Naive thymus-derived CD4-positive, alpha-beta T cell (primary cell): ENCODE measurements at regions of chr19 and their contacts with region 1.

Region 1: GRCh38 chr19:49331616-49332055 is 3.6 kb upstream of the CD37 start:
- DNase-seq: peak in 8 of 9 donors; percentile 48 to 76 (median 65)
- ATAC-seq: peak; percentile 83
- H3K4me3 ChIP-seq: no peak overlapping the region
- H3K4me3 Mint-ChIP-seq: peak overlapping the region in 9 of 10 donors; percentile 14 to 99 (median 49)
- H3K27ac ChIP-seq: peak overlapping the region; percentile 4
- H3K27ac Mint-ChIP-seq: peak overlapping the region; percentile 54 to 99 (median 87)
- H3K4me1 ChIP-seq: peaks cover 37 to 44% of the 10 kb centered on the region in 2 donors
- H3K4me1 Mint-ChIP-seq: peaks cover 54 to 80% (median 70%) of the 10 kb centered on the region in 7 donors
- H3K27me3 ChIP-seq: no peaks in the 10 kb centered on the region
- H3K27me3 Mint-ChIP-seq: no peaks in the 10 kb centered on the region

Region 2: DNA sequence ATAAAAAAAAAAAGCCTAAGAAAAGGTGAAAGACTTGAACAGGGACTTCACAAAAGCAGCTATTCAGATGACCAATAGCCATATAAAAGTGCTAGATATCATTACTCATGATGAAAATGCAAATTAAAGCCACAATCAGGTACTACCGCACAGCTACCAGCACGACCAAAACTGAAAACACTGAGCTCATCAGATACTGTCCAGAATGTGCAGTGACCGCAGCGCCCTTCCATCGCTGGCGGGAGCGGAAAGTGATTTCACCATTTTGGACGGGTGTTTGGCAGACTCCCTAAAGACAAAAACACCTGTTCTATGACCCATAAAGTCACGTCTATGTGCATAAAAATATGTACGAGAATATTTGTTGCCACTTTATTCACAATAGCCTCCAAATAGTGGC is 67.4 kb before region 1 on chr19:
- CTCF ChIA-PET with region 1: interaction called, 4 read pairs
- POLR2A ChIA-PET with region 1: no interaction called
- intact Hi-C with region 1: loop called (anchors 2 to 10 kb)
- DNase-seq: no peak
- ATAC-seq: no peak
- H3K4me3 ChIP-seq: no peak overlapping the region
- H3K4me3 Mint-ChIP-seq: no peak overlapping the region
- H3K27ac ChIP-seq: no peak overlapping the region
- H3K27ac Mint-ChIP-seq: no peak overlapping the region
- H3K4me1 ChIP-seq: no peaks in the 10 kb centered on the region
- H3K4me1 Mint-ChIP-seq: peaks cover 0 to 8% (median 0%) of the 10 kb centered on the region in 7 donors
- H3K27me3 ChIP-seq: no peaks in the 10 kb centered on the region
- H3K27me3 Mint-ChIP-seq: peaks cover 13 to 30% (median 24%) of the 10 kb centered on the region in 5 donors

Region 3: DNA sequence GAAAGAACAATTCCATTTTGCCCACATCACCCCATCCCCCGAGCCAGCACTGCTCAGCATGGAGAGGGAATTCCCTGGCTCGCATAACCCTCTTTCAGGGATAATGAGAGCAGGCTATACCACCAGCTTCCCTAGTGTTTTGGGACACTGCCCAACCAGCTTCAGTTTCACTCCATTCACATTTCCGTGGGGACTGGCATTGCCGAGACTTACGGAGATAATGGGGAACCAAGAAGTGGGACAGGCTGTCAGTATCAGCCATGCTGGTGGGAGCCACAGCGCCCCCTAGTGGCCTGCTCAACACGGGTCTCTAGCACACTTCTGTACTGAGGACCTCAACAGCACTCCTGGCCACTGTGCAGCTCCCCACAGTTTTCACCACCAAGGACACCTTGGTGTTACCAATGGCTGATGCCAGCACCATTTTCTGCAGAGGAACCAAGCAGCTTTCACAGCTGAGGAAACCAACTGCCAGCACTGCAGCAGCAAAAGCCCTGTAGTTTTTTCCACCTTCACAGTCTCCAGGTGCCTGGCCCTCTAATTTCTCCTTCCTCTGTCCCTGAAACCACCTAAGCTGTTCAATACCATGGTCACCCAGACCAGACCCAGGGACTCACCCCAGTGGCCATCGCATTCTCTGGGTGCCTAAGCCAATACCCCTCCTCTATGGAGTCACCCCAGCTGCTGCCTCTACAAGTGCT is 30.3 kb before region 1 on chr19:
- CTCF ChIA-PET with region 1: interaction called, 3 read pairs
- POLR2A ChIA-PET with region 1: interaction called, 6 read pairs
- intact Hi-C with region 1: loop called in 1 of 2 experiments (anchors 1 kb)
- DNase-seq: peak; percentile 45 to 82 (median 66)
- ATAC-seq: peak; percentile 99
- H3K4me3 ChIP-seq: no peak overlapping the region
- H3K4me3 Mint-ChIP-seq: peak overlapping the region in 2 of 10 donors; percentile 15 to 25
- H3K27ac ChIP-seq: no peak overlapping the region
- H3K27ac Mint-ChIP-seq: peak overlapping the region in 1 of 9 donors; percentile 36
- H3K4me1 ChIP-seq: no peaks in the 10 kb centered on the region
- H3K4me1 Mint-ChIP-seq: peaks cover 0 to 8% (median 4%) of the 10 kb centered on the region in 7 donors
- H3K27me3 ChIP-seq: no peaks in the 10 kb centered on the region
- H3K27me3 Mint-ChIP-seq: peaks cover 0 to 17% (median 0%) of the 10 kb centered on the region in 5 donors

Region 4: DNA sequence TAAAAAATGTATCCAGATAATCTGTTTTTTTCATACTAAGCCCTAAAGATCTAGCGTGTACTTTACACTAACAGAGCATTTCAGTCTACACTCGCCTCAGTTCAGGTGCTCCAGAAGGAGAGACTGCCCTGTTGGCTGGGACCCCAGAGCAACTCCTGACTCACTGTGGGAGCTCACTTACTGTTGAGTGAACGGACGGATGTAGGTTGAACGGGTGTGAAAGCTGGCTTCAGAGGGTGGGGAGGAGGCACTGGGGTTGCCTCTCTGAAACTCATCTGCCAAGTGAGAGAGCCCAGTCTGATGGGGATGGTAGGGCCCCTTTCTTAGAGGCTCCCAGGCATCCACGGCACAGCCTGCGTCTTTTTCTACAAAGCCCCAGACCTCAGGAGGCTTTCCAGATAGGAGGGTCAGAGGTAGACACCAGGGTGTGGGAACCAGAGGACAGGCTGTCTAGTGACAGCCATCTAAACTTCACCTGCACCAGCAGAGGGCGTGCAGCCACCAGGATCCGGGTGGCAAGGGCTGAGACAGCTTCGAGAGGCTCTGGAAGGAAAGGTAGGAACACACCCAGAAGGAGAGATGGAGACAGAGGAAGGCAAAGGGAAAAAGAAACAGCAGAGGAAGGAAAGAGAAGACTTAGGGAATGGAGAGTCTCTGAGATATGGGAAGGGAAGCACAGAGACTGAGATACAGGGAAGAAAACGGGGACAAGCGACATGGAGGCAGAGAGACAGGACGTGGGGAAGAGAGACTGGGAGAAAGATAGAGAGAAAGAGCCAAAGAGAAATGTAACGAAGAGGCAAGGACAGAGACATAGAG is 60.2 kb after region 1 on chr19:
- CTCF ChIA-PET with region 1: no interaction called
- POLR2A ChIA-PET with region 1: interaction called, 4 read pairs
- intact Hi-C with region 1: loop called in 1 of 2 experiments (anchors 2 kb)
- DNase-seq: peak; percentile 61 to 82 (median 74)
- ATAC-seq: peak; percentile 89
- H3K4me3 ChIP-seq: no peak overlapping the region
- H3K4me3 Mint-ChIP-seq: peak overlapping the region in 2 of 10 donors; percentile 3 to 51
- H3K27ac ChIP-seq: no peak overlapping the region
- H3K27ac Mint-ChIP-seq: peak overlapping the region in 6 of 9 donors; percentile 1 to 84 (median 54)
- H3K4me1 ChIP-seq: peaks cover 7 to 13% of the 10 kb centered on the region in 2 donors
- H3K4me1 Mint-ChIP-seq: peaks cover 6 to 26% (median 10%) of the 10 kb centered on the region in 7 donors
- H3K27me3 ChIP-seq: no peaks in the 10 kb centered on the region
- H3K27me3 Mint-ChIP-seq: peaks cover 0 to 11% (median 3%) of the 10 kb centered on the region in 5 donors